Mucosa of descending colon (tissue), 3 donors: ENCODE measurements at regions of chr22 and their contacts with region 1.

Region 1: DNA sequence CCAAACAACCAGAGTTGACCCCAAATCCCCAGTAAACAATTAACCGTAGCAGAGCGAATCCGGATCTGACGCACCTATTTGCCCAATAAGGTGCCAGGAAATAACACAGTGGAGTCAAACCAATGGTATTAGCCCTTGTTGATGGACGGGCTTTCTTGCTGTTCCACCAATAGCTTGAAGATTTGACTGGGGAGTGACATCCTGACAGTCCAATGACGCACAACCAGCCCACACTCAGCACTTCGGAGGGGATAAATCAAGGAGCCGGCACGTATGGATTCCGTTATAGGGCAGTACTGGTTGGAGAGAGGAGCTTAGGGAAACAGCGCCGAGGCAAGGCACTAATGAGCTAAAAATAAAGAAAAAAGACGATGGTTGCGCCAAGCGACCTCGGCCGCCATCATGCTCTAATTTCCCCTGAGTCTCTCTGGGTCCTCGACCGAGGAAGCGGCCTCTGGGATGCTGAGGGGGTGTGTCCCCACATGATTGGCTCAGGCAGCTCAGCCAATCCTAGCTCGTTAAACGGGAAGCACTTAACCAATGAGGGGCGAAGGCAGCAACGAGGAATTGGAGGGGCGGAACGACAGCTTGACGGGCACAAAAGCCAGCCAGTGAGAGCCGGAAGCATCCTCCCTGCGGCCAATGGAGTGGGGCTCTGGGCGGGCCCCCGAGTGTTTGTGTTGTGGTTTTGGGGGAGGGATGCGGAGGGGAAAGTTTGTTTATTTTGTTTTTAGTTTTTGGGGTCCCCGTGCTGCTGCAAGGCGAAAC is 49.5 kb downstream of the FAM83F start:
- DNase-seq: peak; percentile 97 to 99 (median 99)
- ATAC-seq: peak; percentile 93
- H3K4me3 ChIP-seq: peak overlapping the region; percentile 56
- H3K4me1 ChIP-seq: peaks cover 16% of the 10 kb centered on the region
- CTCF ChIP-seq: peak; percentile 14

Region 2: GRCh38 chr22:40346178-40347118 is 302.2 kb after region 1 on chr22 and contains the start of gene ADSL:
- intact Hi-C with region 1: loop called in 1 of 2 experiments (anchors 10 kb)
- DNase-seq: peak; percentile 93
- ATAC-seq: peak; percentile 94
- H3K4me3 ChIP-seq: peak within 1 kb of the TSS; percentile 56
- H3K4me1 ChIP-seq: peaks cover 22% of the 10 kb centered on the region
- CTCF ChIP-seq: no peak
- total RNA-seq, gene ADSL: 34.0 to 48.1 (median 42.8) TPM

Region 3: GRCh38 chr22:40361100-40361499 is 316.8 kb after region 1 on chr22:
- intact Hi-C with region 1: no loop called
- DNase-seq: no peak
- ATAC-seq: no peak
- H3K4me3 ChIP-seq: no peak overlapping the region
- H3K4me1 ChIP-seq: no peaks in the 10 kb centered on the region
- CTCF ChIP-seq: no peak